Psoas muscle (tissue), 8 donors: ENCODE measurements at regions of chr9 and their contacts with region 1.

Region 1: GRCh38 chr9:37913480-37914153 is 9.7 kb upstream of the SLC25A51 start:
- DNase-seq: peak; percentile 62 to 77
- ATAC-seq: peak; percentile 90 to 94 (median 92)
- H3K4me3 ChIP-seq: no peak overlapping the region
- H3K27ac ChIP-seq: no peak overlapping the region
- H3K4me1 ChIP-seq: peaks cover 4% of the 10 kb centered on the region
- H3K27me3 ChIP-seq: no peaks in the 10 kb centered on the region
- CTCF ChIP-seq: peak; percentile 98

Region 2: GRCh38 chr9:37693260-37693659 is 220.4 kb before region 1 on chr9:
- intact Hi-C with region 1: no loop called
- DNase-seq: no peak
- ATAC-seq: peak; percentile 90 to 94 (median 92)
- H3K4me3 ChIP-seq: peak overlapping the region; percentile 63
- H3K27ac ChIP-seq: peak overlapping the region; percentile 81
- H3K4me1 ChIP-seq: peaks cover 9% of the 10 kb centered on the region
- H3K27me3 ChIP-seq: no peaks in the 10 kb centered on the region
- CTCF ChIP-seq: no peak

Region 3: DNA sequence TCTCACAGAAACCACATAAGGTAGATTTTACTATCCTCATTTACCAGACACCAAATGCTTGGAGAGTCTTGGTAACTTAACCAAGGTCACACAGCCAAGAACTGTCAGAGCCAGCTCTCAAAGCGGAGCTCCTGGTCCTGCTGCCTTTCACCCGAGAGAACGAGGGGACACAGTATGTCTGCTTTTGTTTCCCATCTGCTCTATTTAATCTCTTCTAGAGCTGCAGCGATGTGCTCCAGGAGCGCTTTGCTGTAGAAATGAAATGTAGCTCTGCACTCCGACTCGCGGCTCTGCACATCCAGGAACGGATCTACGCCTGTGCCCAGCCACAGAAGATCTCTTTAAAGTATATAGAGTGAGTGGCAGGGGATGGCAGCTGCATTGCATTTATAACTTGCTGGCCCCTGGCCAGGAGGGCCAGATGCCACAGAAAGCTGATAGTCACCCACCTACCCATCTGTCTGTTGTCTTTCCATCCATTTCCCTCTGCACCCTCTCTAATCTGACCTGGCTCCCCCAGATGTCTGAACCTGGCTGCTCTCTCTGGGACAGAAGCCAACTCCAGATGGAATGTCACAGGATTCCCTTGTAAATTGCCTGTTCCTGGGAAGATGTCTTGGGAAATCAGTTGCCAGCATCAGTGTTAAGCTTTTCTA is 181.4 kb before region 1 on chr9:
- intact Hi-C with region 1: no loop called
- DNase-seq: no peak
- ATAC-seq: no peak
- H3K4me3 ChIP-seq: no peak overlapping the region
- H3K27ac ChIP-seq: no peak overlapping the region
- H3K4me1 ChIP-seq: no peaks in the 10 kb centered on the region
- H3K27me3 ChIP-seq: no peaks in the 10 kb centered on the region
- CTCF ChIP-seq: no peak

Region 4: GRCh38 chr9:37769306-37769705 is 144.3 kb before region 1 on chr9:
- intact Hi-C with region 1: no loop called
- DNase-seq: no peak
- ATAC-seq: no peak
- H3K4me3 ChIP-seq: no peak overlapping the region
- H3K27ac ChIP-seq: no peak overlapping the region
- H3K4me1 ChIP-seq: no peaks in the 10 kb centered on the region
- H3K27me3 ChIP-seq: no peaks in the 10 kb centered on the region
- CTCF ChIP-seq: no peak

Region 5: DNA sequence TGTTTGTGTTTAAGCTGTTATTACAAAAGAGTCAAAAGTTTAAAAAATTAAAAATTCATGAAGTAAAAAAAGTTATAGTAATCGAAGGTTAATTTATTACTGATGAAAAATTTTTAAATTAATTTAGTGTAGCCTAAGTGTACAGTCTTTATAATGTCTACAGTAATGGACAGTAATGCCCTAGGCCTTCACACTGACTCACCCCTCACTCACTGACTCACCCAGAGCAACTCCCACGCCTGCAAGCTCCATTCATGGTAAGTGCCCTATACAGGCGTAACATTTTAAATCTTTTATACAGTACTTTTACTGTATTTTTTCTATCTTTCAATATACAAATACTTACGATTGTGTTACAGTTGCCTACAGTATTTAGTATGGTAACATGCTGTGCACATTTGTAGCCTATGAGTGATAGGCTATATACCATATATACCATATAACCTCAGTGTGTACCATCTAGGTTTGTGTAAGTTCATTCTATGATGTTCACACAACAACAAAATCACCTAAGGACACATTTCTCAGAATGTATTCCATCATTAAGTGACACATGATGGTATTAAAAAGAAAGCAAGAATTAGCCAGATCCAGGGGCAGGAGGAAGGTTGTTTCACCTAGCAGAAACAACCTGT is 72.9 kb before region 1 on chr9:
- intact Hi-C with region 1: no loop called
- DNase-seq: no peak
- ATAC-seq: no peak
- H3K4me3 ChIP-seq: no peak overlapping the region
- H3K27ac ChIP-seq: no peak overlapping the region
- H3K4me1 ChIP-seq: no peaks in the 10 kb centered on the region
- H3K27me3 ChIP-seq: no peaks in the 10 kb centered on the region
- CTCF ChIP-seq: no peak

Region 6: GRCh38 chr9:37966412-37967271 is 53.0 kb after region 1 on chr9:
- intact Hi-C with region 1: loop called in 1 of 2 experiments (anchors 5 kb)
- DNase-seq: no peak
- ATAC-seq: no peak
- H3K4me3 ChIP-seq: no peak overlapping the region
- H3K27ac ChIP-seq: no peak overlapping the region
- H3K4me1 ChIP-seq: peaks cover 17% of the 10 kb centered on the region
- H3K27me3 ChIP-seq: no peaks in the 10 kb centered on the region
- CTCF ChIP-seq: no peak

Region 7: GRCh38 chr9:38068866-38069629 is 155.4 kb after region 1 on chr9 and contains the start of gene SHB:
- intact Hi-C with region 1: loop called (anchors 5 kb)
- DNase-seq: peak; percentile 86 to 89
- ATAC-seq: peak; percentile 73 to 81 (median 78)
- H3K4me3 ChIP-seq: peak within 1 kb of the TSS; percentile 98
- H3K27ac ChIP-seq: peak within 1 kb of the TSS; percentile 97
- H3K4me1 ChIP-seq: peaks cover 34% of the 10 kb centered on the region
- H3K27me3 ChIP-seq: no peaks in the 10 kb centered on the region
- CTCF ChIP-seq: no peak
- total RNA-seq, gene SHB: 4.8 to 26.2 (median 12.4) TPM

Region 8: DNA sequence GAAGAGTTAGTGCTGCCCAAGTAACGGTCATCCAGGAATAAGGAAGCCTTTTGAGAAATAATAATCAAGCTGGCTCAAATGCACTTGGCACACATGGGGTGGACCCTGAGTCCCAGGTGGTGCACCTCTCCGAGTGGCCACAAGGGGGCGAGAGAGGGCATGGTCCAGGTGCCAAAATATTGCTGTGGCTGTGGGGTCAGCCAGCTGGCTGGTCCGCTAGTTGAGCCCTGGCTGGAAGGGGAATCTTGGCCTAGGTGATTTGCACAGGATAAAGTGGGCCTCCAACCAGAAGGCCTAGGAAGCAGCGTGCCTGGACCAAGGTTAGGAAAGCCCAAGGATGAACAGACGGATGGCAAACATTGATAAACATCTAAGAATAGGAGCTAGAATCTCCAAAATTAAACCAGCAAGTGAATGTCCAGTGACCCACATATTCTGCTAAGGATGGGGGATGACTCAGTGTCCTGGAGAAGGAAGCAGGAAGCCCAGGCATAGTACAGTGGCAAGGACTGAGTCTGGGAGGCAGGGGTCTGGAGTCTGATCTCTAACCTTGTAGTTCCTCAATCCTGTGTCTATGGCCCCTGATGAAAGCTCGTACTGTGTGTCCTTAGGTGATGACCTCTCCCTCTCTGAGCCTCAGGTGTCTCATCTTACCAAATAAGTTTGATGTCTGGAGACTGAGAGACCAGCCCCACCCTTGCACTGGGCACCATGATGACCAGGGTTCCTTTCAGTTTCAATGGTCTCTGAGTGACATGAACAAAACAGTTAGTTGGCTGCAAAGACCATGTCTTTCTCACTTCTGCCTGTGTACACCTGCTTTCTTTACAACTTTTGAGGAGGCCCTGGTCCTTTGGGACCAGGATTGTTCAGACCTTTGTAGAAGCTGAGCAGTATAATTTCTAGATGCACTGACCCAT is 174.6 kb after region 1 on chr9:
- intact Hi-C with region 1: loop called in 1 of 2 experiments (anchors 5 kb)
- DNase-seq: peak; percentile 76 to 85
- ATAC-seq: peak; percentile 87 to 96 (median 90)
- H3K4me3 ChIP-seq: no peak overlapping the region
- H3K27ac ChIP-seq: peak overlapping the region; percentile 46
- H3K4me1 ChIP-seq: peaks cover 12% of the 10 kb centered on the region
- H3K27me3 ChIP-seq: no peaks in the 10 kb centered on the region
- CTCF ChIP-seq: peak; percentile 98

Region 9: GRCh38 chr9:38160613-38161215 is 247.1 kb after region 1 on chr9:
- intact Hi-C with region 1: loop called (anchors 2 to 5 kb)
- DNase-seq: peak; percentile 47 to 71
- ATAC-seq: peak; percentile 73 to 82 (median 80)
- H3K4me3 ChIP-seq: no peak overlapping the region
- H3K27ac ChIP-seq: no peak overlapping the region
- H3K4me1 ChIP-seq: no peaks in the 10 kb centered on the region
- H3K27me3 ChIP-seq: no peaks in the 10 kb centered on the region
- CTCF ChIP-seq: peak; percentile 86

Region 10: DNA sequence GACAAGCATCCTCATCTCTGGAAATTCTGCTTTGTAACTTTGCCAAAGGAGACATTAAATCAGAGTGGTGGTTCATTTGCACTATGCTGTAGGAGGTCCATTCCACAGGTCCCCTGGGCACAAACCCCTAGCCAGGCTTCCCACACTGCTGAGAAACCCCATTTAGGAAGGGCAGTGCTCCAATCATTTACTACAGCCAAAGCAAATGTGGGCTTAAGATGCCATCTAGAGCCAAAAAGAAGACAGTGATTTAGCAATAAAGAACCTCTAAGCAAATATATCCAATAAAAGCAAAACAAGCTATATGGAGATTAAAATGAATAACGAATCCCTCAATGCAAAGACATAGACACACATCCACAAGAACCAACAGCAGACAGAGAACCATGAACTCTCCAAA is 349.9 kb after region 1 on chr9:
- intact Hi-C with region 1: loop called in 1 of 2 experiments (anchors 10 kb)
- DNase-seq: no peak
- ATAC-seq: no peak
- H3K4me3 ChIP-seq: no peak overlapping the region
- H3K27ac ChIP-seq: no peak overlapping the region
- H3K4me1 ChIP-seq: no peaks in the 10 kb centered on the region
- H3K27me3 ChIP-seq: no peaks in the 10 kb centered on the region
- CTCF ChIP-seq: no peak

Region 11: GRCh38 chr9:38362852-38363593 is 449.4 kb after region 1 on chr9:
- intact Hi-C with region 1: loop called (anchors 2 to 5 kb)
- DNase-seq: peak in 1 of 2 donors; percentile 28
- ATAC-seq: peak; percentile 75 to 86 (median 79)
- H3K4me3 ChIP-seq: no peak overlapping the region
- H3K27ac ChIP-seq: no peak overlapping the region
- H3K4me1 ChIP-seq: no peaks in the 10 kb centered on the region
- H3K27me3 ChIP-seq: no peaks in the 10 kb centered on the region
- CTCF ChIP-seq: peak; percentile 70